ENCODE measurements at regions of chr15 and their contacts with region 1.

Region 1: DNA sequence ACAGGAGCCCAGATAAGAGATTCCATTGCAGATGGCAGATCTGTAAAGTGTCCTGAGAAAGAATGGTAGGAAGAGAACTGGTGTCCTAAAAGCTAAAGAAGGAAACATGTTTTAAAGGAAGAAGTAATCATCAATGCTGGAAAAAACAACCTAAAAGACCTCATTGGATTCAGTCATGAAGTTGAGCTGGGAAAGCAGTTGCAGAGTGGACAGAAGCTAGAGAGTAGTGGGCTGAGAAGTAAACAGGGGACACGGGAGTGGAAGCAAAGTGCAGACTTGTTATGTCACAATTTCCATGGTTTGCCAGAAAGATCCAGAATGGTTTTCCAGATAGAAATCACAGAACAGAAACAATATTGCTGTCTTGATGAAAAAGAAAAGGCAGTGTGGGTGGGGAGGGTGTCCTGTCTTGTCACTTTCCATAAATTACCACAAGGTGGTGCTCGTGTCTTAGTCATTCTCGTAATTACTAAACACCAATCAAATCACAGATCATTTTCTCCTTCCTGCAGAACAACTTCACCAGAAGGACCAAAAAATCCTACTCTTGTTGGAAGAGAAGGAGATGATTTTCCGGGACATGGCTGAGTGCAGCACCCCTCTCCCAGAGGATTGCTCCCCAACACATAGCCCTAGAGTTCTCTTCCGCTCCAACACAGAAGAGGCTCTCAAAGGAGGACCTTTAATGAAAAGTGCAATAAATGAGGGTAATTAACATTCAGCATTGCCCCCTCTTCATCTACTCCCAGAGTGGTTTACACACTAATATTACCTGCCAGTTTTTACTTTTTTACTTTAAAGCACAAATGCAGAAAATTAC is 64.5 kb downstream of the KLHL25 start:
- DNase-seq: peak; percentile 62
- CTCF ChIP-seq: peak; percentile 67

Region 2: DNA sequence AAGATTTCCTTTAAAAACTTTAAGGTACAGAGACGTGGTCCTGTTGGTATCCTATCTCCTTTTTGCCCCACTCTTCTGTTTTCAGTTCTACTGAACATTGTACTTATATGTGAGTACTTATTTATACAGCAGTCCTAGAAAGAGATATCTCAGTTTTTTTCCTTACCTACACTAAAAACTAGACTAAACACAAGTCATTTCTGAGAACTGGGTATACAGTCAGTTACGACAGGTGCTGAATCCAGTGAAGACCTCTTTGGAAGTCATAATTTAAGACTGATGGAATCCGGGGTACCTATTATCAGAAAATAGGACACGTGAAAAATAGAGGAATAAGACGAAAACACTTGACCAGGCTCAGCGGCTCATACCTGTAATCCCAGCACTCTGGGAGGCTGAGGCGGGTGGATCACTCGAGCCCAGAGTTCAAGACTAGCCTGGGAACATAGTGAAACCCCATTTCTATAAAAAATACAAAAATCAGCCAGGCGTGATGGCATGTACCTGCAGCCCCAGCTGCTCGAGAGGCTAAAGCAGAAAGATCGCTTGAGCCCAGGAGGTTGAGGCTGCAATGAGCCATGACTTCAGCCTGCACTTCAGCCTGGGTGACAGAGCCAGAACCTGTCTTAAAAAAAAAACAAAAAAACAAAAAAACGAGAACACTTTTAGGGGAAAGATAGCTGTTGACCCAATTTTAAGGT is 11.8 kb before region 1 on chr15:
- CTCF ChIA-PET with region 1: interaction called, 16 read pairs
- POLR2A ChIA-PET with region 1: interaction called, 3 read pairs
- DNase-seq: no peak
- CTCF ChIP-seq: no peak

Region 3: GRCh38 chr15:85742186-85742821 is 12.1 kb after region 1 on chr15:
- CTCF ChIA-PET with region 1: interaction called, 30 read pairs
- POLR2A ChIA-PET with region 1: interaction called, 4 read pairs
- DNase-seq: no peak
- CTCF ChIP-seq: no peak

Region 4: DNA sequence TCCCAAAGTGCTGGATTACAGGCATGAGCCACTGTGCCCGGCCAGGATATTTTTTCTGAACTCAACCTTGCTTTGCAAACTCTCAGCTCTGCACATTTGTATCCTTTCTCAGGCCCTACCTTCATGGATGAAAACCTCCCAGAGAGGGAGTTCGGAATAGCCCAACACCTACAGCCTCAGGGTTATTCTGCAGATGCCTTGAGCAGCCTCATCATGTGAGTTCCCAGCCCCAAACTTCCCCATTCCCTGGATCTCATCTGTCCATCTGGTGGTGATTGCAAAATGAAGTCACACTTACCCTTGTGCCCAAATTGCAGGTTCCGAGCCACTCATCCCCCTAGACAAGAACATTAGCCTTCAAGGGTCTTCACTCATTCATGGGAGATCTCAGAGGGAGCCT is 104.4 kb after region 1 on chr15:
- CTCF ChIA-PET with region 1: interaction called, 47 read pairs
- POLR2A ChIA-PET with region 1: interaction called, 11 read pairs
- DNase-seq: no peak
- CTCF ChIP-seq: no peak

Region 5: DNA sequence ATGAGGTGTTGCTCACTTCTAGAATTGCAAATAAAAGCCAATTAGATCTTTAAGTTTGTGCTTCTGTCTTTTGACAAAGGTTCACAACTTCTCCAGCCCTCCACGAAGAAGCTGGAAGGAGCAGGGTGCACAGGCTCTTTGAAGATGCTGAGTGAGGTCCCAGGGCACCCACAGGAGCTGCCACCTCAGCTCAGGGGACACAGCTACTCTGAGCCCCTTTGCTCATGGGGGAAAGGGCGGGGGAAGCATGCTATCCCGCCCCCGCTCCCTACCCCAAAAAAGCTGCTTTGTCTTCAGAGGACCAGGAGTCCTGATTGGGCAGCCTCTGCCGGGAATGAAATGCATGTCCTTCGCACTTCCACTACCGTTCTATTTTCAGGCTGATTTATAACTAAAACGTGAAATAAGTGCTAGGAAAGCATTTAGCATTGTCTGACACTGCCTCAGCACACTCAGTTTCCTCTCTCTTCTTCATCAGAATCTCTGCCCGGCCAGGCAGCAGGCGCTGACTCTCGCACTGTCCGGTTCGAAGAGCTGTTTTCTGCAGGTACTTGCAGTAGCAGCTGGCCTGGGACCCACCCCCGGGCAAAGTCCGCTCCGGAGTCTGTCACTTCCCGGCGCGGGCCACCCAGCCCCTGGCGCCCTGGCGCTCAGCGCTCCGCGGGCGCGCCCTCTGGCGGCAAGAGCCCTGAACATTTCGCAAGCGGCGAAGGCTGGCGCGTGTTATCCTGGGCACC is 110.0 kb after region 1 on chr15:
- CTCF ChIA-PET with region 1: interaction called, 47 read pairs
- POLR2A ChIA-PET with region 1: interaction called, 11 read pairs
- DNase-seq: peak; percentile 88
- CTCF ChIP-seq: peak; percentile 94

Region 6: GRCh38 chr15:85956532-85957275 is 226.5 kb after region 1 on chr15:
- CTCF ChIA-PET with region 1: no interaction called
- POLR2A ChIA-PET with region 1: no interaction called
- DNase-seq: no peak
- CTCF ChIP-seq: no peak

Measured in GM10248 (cell line).